ENCODE measurements at regions of chr20 and their contacts with region 1.

Region 1: GRCh38 chr20:45095753-45096371 is 5.1 kb downstream of the KCNS1 start:
- DNase-seq: no peak
- H3K4me3 ChIP-seq: no peak overlapping the region
- H3K27ac ChIP-seq: no peak overlapping the region
- H3K27me3 ChIP-seq: peaks cover 30% of the 10 kb centered on the region
- CTCF ChIP-seq: peak; percentile 83

Region 2: DNA sequence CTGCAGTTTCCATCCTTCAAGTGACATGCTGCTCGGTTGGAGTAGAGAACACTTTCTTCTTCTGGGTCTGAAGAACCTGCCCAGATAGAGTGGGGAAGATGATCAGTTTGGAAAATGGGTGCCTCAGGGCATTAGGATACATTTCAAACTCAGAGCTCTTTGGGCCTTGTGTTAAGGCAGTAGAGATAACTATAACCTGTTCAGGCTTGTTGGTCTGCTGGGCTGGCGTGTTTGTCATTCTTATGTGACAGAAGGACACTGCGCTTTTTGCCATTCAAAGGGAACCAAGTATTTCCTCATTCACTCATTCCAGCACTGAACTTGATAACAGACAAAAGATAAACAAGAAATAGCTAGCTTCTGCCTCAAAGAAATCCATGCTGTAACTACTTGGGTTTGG is 139.5 kb before region 1 on chr20:
- CTCF ChIA-PET with region 1: interaction called, 11 read pairs
- POLR2A ChIA-PET with region 1: no interaction called
- DNase-seq: no peak
- H3K4me3 ChIP-seq: no peak overlapping the region
- H3K27ac ChIP-seq: no peak overlapping the region
- H3K27me3 ChIP-seq: no peaks in the 10 kb centered on the region
- CTCF ChIP-seq: no peak

Region 3: DNA sequence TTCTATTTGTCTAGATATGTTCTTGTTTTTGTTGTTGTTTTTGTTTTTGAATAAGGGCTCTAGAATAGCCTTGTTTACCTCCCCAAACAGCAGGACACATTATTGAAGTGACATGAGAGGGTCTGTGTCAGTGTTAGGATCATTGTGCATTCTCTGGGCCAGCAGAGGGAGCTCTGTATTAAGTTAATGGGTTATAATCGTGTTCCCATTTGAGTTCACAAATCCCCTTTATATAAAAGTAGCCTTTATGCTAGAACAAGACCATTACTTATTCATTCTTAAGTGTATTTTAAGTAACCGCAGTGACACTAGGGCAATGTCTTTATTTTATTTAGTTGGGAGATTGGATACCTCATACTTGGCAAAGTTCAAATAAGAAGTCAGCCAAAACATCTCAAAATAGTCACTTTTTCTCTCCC is 84.7 kb before region 1 on chr20:
- CTCF ChIA-PET with region 1: interaction called, 81 read pairs
- POLR2A ChIA-PET with region 1: no interaction called
- DNase-seq: peak; percentile 39
- H3K4me3 ChIP-seq: no peak overlapping the region
- H3K27ac ChIP-seq: peak overlapping the region; percentile 76
- H3K27me3 ChIP-seq: no peaks in the 10 kb centered on the region
- CTCF ChIP-seq: peak; percentile 76

Region 4: DNA sequence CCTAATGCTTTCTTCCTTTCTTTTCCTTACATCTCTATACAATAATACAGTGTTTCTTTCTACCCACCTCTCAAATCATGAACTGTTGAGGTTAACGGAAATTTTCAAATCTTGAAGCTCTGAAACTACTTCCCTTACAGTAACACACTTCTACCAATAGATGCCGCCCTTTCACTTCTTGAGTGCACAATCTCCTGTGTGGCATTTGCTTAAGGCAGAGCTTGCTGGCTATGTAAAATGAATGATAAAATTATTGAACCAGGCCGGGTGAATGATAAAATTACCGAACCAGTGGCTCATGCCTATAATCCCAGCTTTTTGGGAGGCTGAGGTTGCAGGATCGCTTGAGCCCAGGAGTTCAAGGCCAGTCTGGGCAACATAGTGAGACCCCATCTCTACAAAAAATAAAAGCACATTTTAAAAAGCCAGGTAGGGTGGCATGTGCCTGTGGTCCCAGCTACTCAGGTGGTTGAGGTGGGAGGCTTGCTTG is 51.7 kb before region 1 on chr20:
- CTCF ChIA-PET with region 1: interaction called, 275 read pairs
- POLR2A ChIA-PET with region 1: interaction called, 4 read pairs
- DNase-seq: peak; percentile 55
- H3K4me3 ChIP-seq: no peak overlapping the region
- H3K27ac ChIP-seq: no peak overlapping the region
- H3K27me3 ChIP-seq: no peaks in the 10 kb centered on the region
- CTCF ChIP-seq: peak; percentile 94

Region 5: DNA sequence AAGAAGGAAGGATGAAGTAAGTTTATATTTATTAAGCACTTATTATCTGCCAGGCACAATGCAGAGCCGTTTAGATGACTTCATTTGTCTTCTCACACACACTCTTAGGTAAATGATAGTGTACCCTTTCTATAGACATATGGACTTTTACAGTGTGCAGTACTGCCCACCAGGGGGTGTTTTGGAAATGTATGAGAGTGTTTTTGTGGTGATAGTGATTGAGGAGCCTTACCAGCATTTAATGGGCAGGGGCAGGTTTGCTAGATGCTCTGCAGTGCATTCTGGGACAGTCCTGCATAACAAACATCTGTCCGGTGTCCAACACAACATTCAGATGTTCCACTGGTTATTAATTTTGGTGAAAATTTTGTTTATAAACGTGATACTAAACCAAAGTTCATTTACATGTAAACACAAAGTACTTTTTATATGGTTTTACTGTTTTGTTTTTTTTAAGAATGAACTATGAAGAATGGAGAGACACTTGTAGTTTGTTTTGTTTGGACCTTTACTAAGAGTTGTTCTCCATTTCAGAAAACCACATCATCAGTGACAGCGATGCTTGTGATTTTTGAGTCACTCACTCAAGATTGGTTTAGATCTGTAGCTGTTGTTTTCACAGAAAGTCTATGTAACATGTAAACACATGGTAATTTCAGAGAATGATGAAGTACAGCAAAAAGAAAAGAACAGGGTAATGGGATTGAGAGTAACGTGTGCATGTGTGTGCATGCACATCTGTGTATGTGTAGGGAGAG is 14.8 kb before region 1 on chr20:
- CTCF ChIA-PET with region 1: interaction called, 25 read pairs
- POLR2A ChIA-PET with region 1: no interaction called
- DNase-seq: no peak
- H3K4me3 ChIP-seq: no peak overlapping the region
- H3K27ac ChIP-seq: no peak overlapping the region
- H3K27me3 ChIP-seq: no peaks in the 10 kb centered on the region
- CTCF ChIP-seq: peak; percentile 66

Region 6: DNA sequence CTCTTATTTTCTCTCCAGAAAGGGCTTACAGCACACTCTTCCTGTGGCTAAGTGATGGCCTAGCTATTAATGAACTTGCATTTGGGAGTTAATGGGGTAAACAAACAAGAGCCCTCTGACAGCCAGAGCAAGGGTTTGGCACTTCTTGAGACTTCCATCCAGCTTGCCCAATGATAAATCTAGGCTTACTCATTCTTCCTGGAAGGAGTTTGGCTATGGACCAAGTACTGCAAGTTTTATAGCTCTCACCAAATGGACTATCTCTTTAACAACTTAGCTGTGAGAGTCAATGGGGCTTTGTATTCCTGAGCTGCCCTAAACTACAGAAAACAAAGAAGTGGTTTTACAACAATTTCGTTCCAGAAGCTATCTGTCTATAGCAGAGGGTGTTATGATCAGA is 62.1 kb after region 1 on chr20:
- CTCF ChIA-PET with region 1: no interaction called
- POLR2A ChIA-PET with region 1: no interaction called
- DNase-seq: no peak
- H3K4me3 ChIP-seq: no peak overlapping the region
- H3K27ac ChIP-seq: no peak overlapping the region
- H3K27me3 ChIP-seq: peaks cover 4% of the 10 kb centered on the region
- CTCF ChIP-seq: no peak

Region 7: GRCh38 chr20:45293041-45294002 is 197.5 kb after region 1 on chr20:
- CTCF ChIA-PET with region 1: interaction called, 108 read pairs
- POLR2A ChIA-PET with region 1: no interaction called
- DNase-seq: no peak
- H3K4me3 ChIP-seq: peak overlapping the region; percentile 58
- H3K27ac ChIP-seq: no peak overlapping the region
- H3K27me3 ChIP-seq: peaks cover 19% of the 10 kb centered on the region
- CTCF ChIP-seq: peak; percentile 94

Region 8: GRCh38 chr20:45581702-45582101 is 485.8 kb after region 1 on chr20:
- CTCF ChIA-PET with region 1: no interaction called
- POLR2A ChIA-PET with region 1: no interaction called
- DNase-seq: no peak
- H3K4me3 ChIP-seq: no peak overlapping the region
- H3K27ac ChIP-seq: no peak overlapping the region
- H3K27me3 ChIP-seq: peaks cover 2% of the 10 kb centered on the region
- CTCF ChIP-seq: no peak